Lower leg skin (tissue), 4 donors: ENCODE measurements at regions of chr9 and their contacts with region 1.

Region 1: DNA sequence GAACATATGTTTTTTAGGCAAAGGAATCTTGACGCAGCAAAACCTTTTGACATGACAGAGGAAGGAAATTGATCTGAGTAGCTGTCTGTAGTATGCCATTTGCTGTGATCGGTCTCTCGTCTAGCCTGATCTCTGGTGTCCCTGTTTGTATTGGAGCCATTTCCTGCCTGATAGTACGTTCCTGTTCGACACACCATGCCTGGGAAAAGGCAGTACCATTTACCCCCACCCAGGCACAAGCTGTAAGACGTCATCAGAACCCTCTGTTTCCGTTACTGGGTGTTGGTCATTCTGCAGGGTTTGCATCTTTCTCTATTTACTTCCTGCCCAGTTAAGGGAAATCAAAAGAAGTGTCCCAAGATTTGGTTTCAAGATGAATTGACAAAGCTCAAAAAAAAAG is 129.7 kb downstream of the CEMIP2 start:
- DNase-seq: peak in 1 of 2 donors; percentile 49
- H3K4me3 ChIP-seq: no peak overlapping the region
- CTCF ChIP-seq: no peak
- POLR2A ChIP-seq: no peak

Region 2: GRCh38 chr9:71587576-71588362 is 50.9 kb before region 1 on chr9:
- intact Hi-C with region 1: loop called (anchors 10 kb)
- DNase-seq: no peak
- H3K4me3 ChIP-seq: no peak overlapping the region
- CTCF ChIP-seq: no peak
- POLR2A ChIP-seq: no peak